GM23248 (cell line): ENCODE measurements at regions of chr1 and their contacts with region 1.

Region 1: DNA sequence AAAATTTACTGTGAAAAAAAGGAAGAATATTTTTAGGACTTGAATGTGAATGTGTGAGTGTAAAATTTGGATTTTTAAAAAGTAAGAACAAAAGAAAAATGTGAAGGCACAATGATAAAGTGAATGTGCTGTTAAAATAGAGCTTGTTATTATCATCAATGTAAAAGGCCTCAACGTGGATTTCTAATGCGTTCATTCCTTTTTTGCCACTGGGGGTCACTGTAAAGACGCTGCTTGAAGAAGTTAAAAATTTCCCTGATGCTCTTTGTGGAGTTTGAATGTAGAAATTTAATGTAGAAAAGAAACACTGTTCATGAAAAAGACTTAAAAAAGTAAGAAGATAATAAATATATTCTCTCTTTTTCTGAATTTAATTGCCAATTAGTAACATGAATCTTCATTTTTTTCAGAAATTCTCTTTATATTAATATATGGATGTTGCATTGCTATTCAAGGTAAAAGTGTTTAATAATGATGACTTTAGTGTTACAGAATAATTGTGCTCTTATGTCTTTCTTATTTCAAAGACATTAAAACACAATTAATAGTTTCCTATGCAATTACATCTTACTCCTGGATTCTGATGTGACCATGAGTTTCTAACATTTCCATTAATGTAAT is 161.5 kb downstream of the DNM3 start:
- DNase-seq: peak; percentile 77
- H3K4me3 ChIP-seq: no peak overlapping the region
- H3K27ac ChIP-seq: no peak overlapping the region
- H3K4me1 ChIP-seq: peaks cover 47% of the 10 kb centered on the region
- H3K27me3 ChIP-seq: no peaks in the 10 kb centered on the region

Region 2: DNA sequence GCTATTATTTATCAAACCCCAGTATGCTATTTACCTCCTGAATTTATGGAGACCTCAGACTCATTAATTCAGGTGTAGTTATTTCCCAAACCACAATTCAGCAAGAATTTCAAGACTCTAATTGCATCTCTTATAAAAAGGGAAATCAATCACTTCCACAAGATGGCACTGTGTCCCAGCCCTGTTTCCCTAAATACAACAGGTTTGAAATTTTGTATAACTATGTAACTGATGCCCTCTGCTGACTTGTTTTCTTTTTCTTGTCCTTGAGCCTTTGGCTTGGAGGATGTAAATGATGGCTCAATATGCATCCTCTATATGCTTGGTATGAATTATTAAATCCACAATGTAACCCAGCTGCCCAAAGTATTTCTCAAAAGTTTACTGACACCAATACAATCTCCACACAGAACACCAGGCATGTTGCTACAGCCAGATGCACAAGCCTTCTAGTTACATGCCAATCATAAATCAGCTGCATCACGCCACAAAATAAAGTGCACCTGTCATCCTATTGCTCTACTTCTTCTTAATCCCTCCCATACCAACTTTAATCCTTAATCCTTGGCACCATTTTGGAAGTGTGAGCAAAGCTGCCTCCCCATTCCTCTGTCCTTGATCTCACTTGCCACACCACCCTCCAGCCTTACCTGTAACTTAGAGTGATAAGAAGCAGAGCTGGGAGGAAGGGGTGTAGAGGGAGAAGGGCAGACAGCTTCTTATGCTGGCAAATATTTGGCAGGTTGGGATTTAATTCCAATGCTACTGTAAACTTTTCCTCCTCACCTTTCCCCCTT is 426.7 kb after region 1 on chr1:
- in situ Hi-C with region 1: loop called (anchors 10 kb)
- DNase-seq: peak; percentile 75
- H3K4me3 ChIP-seq: no peak overlapping the region
- H3K27ac ChIP-seq: no peak overlapping the region
- H3K4me1 ChIP-seq: no peaks in the 10 kb centered on the region
- H3K27me3 ChIP-seq: no peaks in the 10 kb centered on the region

Region 3: DNA sequence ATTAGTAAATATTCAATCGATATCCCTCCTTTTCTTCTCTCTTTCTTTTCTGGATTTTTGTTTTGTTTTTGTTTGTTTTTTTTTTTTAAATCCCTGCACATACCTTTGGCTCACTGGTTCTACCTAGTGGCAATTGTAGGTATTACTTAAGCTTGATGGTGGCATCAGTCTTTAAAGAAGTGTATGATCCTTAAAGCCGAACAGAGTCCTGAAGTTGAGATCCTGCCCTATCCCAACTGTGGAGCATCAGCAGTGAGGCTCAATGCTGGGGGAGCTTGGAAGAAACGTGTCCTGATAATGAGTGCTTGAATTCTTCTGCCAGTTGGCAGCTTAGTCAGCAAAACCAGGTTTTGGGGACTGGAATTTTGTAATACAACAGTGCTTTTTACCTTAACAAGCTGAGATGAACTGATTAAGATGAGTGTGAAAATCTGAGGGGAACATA is 716.9 kb after region 1 on chr1:
- in situ Hi-C with region 1: loop called (anchors 25 kb)
- DNase-seq: peak; percentile 58
- H3K4me3 ChIP-seq: no peak overlapping the region
- H3K27ac ChIP-seq: no peak overlapping the region
- H3K4me1 ChIP-seq: no peaks in the 10 kb centered on the region
- H3K27me3 ChIP-seq: no peaks in the 10 kb centered on the region